ENCODE measurements at regions of chr2 and their contacts with region 1.

Region 1: GRCh38 chr2:46296840-46297545 is at the start of gene EPAS1:
- DNase-seq: peak; percentile 99
- ATAC-seq: peak; percentile 90
- H3K4me3 ChIP-seq: peak within 1 kb of the TSS; percentile 83
- H3K27ac ChIP-seq: peak within 1 kb of the TSS; percentile 98
- H3K4me1 ChIP-seq: peaks cover 17% of the 10 kb centered on the region
- H3K27me3 ChIP-seq: no peaks in the 10 kb centered on the region
- CTCF ChIP-seq: no peak
- total RNA-seq, gene EPAS1: 1,593 TPM

Region 2: GRCh38 chr2:46010925-46011490 is 286.0 kb before region 1 on chr2:
- intact Hi-C with region 1: loop called (anchors 10 kb)
- DNase-seq: no peak
- ATAC-seq: peak; percentile 65
- H3K4me3 ChIP-seq: no peak overlapping the region
- H3K27ac ChIP-seq: no peak overlapping the region
- H3K4me1 ChIP-seq: peaks cover 8% of the 10 kb centered on the region
- H3K27me3 ChIP-seq: no peaks in the 10 kb centered on the region
- CTCF ChIP-seq: peak; percentile 70

Region 3: GRCh38 chr2:46351750-46352138 is 54.8 kb after region 1 on chr2:
- intact Hi-C with region 1: loop called (anchors 10 kb)
- DNase-seq: no peak
- ATAC-seq: peak; percentile 45
- H3K4me3 ChIP-seq: peak overlapping the region; percentile 6
- H3K27ac ChIP-seq: peak overlapping the region; percentile 71
- H3K4me1 ChIP-seq: peaks cover 43% of the 10 kb centered on the region
- H3K27me3 ChIP-seq: no peaks in the 10 kb centered on the region
- CTCF ChIP-seq: no peak